Activated CD4-positive, alpha-beta memory T cell treated with anti-CD3 and anti-CD28 coated beads for 36 hours (primary cell): ENCODE measurements at regions of chr14 and their contacts with region 1.

Region 1: GRCh38 chr14:96424109-96424989 is 32.4 kb downstream of the AK7 start:
- DNase-seq: peak; percentile 44
- H3K4me3 Mint-ChIP-seq: peak overlapping the region; percentile 60
- H3K27ac Mint-ChIP-seq: no peak overlapping the region
- H3K4me1 Mint-ChIP-seq: no peaks in the 10 kb centered on the region
- H3K27me3 Mint-ChIP-seq: peaks cover 3% of the 10 kb centered on the region

Region 2: GRCh38 chr14:95561001-95561412 is 863.3 kb before region 1 on chr14:
- CTCF ChIA-PET with region 1: no interaction called
- POLR2A ChIA-PET with region 1: no interaction called
- intact Hi-C with region 1: loop called (anchors 1 kb)
- DNase-seq: peak; percentile 92
- H3K4me3 Mint-ChIP-seq: no peak overlapping the region
- H3K27ac Mint-ChIP-seq: no peak overlapping the region
- H3K4me1 Mint-ChIP-seq: peaks cover 4% of the 10 kb centered on the region
- H3K27me3 Mint-ChIP-seq: peaks cover 5% of the 10 kb centered on the region

Region 3: GRCh38 chr14:96100161-96101029 is 324.0 kb before region 1 on chr14:
- CTCF ChIA-PET with region 1: no interaction called
- POLR2A ChIA-PET with region 1: no interaction called
- intact Hi-C with region 1: loop called (anchors 1 kb)
- DNase-seq: peak; percentile 78
- H3K4me3 Mint-ChIP-seq: no peak overlapping the region
- H3K27ac Mint-ChIP-seq: no peak overlapping the region
- H3K4me1 Mint-ChIP-seq: no peaks in the 10 kb centered on the region
- H3K27me3 Mint-ChIP-seq: no peaks in the 10 kb centered on the region

Region 4: GRCh38 chr14:96297000-96297399 is 127.3 kb before region 1 on chr14:
- CTCF ChIA-PET with region 1: interaction called, 13 read pairs
- POLR2A ChIA-PET with region 1: no interaction called
- intact Hi-C with region 1: loop called (anchors 1 kb)
- DNase-seq: no peak
- H3K4me3 Mint-ChIP-seq: no peak overlapping the region
- H3K27ac Mint-ChIP-seq: no peak overlapping the region
- H3K4me1 Mint-ChIP-seq: no peaks in the 10 kb centered on the region
- H3K27me3 Mint-ChIP-seq: no peaks in the 10 kb centered on the region

Region 5: GRCh38 chr14:96362965-96363756 is 61.2 kb before region 1 on chr14 and contains the starts of genes ATG2B and GSKIP:
- CTCF ChIA-PET with region 1: no interaction called
- POLR2A ChIA-PET with region 1: no interaction called
- intact Hi-C with region 1: loop called (anchors 1 kb)
- DNase-seq: peak; percentile 98
- H3K4me3 Mint-ChIP-seq: peak within 1 kb of the TSS; percentile 83
- H3K27ac Mint-ChIP-seq: peak within 1 kb of the TSS; percentile 83
- H3K4me1 Mint-ChIP-seq: peaks cover 50% of the 10 kb centered on the region
- H3K27me3 Mint-ChIP-seq: no peaks in the 10 kb centered on the region
- total RNA-seq, gene ATG2B: 12.0 to 12.8 TPM
- total RNA-seq, gene GSKIP: 22.8 to 29.7 TPM

Region 6: GRCh38 chr14:96574633-96575632 is 150.6 kb after region 1 on chr14:
- CTCF ChIA-PET with region 1: no interaction called
- POLR2A ChIA-PET with region 1: no interaction called
- intact Hi-C with region 1: no loop called
- DNase-seq: no peak
- H3K4me3 Mint-ChIP-seq: no peak overlapping the region
- H3K27ac Mint-ChIP-seq: no peak overlapping the region
- H3K4me1 Mint-ChIP-seq: no peaks in the 10 kb centered on the region
- H3K27me3 Mint-ChIP-seq: no peaks in the 10 kb centered on the region